ENCODE measurements at regions of chr12 and their contacts with region 1.

Region 1: GRCh38 chr12:49673446-49674317 is 33.5 kb downstream of the FMNL3 start:
- DNase-seq: peak; percentile 86
- H3K4me3 ChIP-seq: no peak overlapping the region
- H3K27ac ChIP-seq: peak overlapping the region; percentile 80 to 86
- H3K4me1 ChIP-seq: peaks cover 22% of the 10 kb centered on the region
- H3K27me3 ChIP-seq: no peaks in the 10 kb centered on the region
- CTCF ChIP-seq: peak in 2 of 4 experiments; percentile 51 to 64
- POLR2A ChIP-seq: peak; percentile 69

Region 2: GRCh38 chr12:49707128-49707811 is 33.6 kb after region 1 on chr12 and contains the start of gene FMNL3:
- intact Hi-C with region 1: loop called (anchors 2 kb)
- DNase-seq: peak; percentile 96
- H3K4me3 ChIP-seq: peak within 1 kb of the TSS; percentile 46 to 61
- H3K27ac ChIP-seq: peak within 1 kb of the TSS; percentile 69 to 73
- H3K4me1 ChIP-seq: no peaks in the 10 kb centered on the region
- H3K27me3 ChIP-seq: no peaks in the 10 kb centered on the region
- CTCF ChIP-seq: peak; percentile 97 to 100 (median 100)
- POLR2A ChIP-seq: peak; percentile 29
- total RNA-seq, gene FMNL3: 4.5 to 52.9 TPM